A673 (cell line): ENCODE measurements at regions of chr2 and their contacts with region 1.

Region 1: GRCh38 chr2:204251158-204251997 is 293.9 kb upstream of the PARD3B start:
- DNase-seq: no peak
- H3K4me3 ChIP-seq: no peak overlapping the region
- H3K27ac ChIP-seq: no peak overlapping the region
- H3K4me1 ChIP-seq: peaks cover 7% of the 10 kb centered on the region
- H3K27me3 ChIP-seq: no peaks in the 10 kb centered on the region
- CTCF ChIP-seq: no peak

Region 2: DNA sequence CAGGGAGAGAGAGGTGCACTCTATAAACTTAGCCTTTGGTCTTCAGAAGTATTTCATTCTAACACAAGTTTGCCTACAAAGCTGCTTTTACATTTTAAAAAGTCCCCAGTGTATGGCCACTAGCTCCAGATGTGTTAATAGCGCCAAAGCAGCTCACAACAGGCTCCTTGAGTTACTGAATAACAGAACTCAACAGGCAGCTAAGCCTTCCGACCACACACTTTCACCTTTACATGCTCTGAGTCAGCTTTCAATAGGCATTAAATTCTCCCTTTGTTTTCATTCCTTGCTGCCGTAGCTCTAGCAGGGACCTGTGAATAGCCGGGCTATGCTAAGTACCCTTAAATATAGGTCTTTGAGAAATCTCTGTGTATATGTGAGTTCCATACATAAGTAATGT is 31.1 kb after region 1 on chr2:
- CTCF ChIA-PET with region 1: no interaction called
- POLR2A ChIA-PET with region 1: no interaction called
- intact Hi-C with region 1: no loop called
- DNase-seq: no peak
- H3K4me3 ChIP-seq: no peak overlapping the region
- H3K27ac ChIP-seq: no peak overlapping the region
- H3K4me1 ChIP-seq: peaks cover 34% of the 10 kb centered on the region
- H3K27me3 ChIP-seq: no peaks in the 10 kb centered on the region
- CTCF ChIP-seq: no peak

Region 3: GRCh38 chr2:205130111-205130829 is 878.9 kb after region 1 on chr2:
- CTCF ChIA-PET with region 1: interaction called, 22 read pairs
- POLR2A ChIA-PET with region 1: no interaction called
- intact Hi-C with region 1: no loop called
- DNase-seq: no peak
- H3K4me3 ChIP-seq: no peak overlapping the region
- H3K27ac ChIP-seq: no peak overlapping the region
- H3K4me1 ChIP-seq: no peaks in the 10 kb centered on the region
- H3K27me3 ChIP-seq: no peaks in the 10 kb centered on the region
- CTCF ChIP-seq: no peak